Endothelial cell of umbilical vein (primary cell): ENCODE measurements at regions of chr12 and their contacts with region 1.

Region 1: GRCh38 chr12:65536876-65537661 is 258.6 kb downstream of the MSRB3 start:
- DNase-seq: peak; percentile 94
- H3K4me3 ChIP-seq: no peak overlapping the region
- H3K27ac ChIP-seq: peak overlapping the region; percentile 98
- H3K4me1 ChIP-seq: peaks cover 58% of the 10 kb centered on the region
- H3K27me3 ChIP-seq: no peaks in the 10 kb centered on the region
- CTCF ChIP-seq: no peak
- POLR2A ChIP-seq: peak; percentile 45

Region 2: DNA sequence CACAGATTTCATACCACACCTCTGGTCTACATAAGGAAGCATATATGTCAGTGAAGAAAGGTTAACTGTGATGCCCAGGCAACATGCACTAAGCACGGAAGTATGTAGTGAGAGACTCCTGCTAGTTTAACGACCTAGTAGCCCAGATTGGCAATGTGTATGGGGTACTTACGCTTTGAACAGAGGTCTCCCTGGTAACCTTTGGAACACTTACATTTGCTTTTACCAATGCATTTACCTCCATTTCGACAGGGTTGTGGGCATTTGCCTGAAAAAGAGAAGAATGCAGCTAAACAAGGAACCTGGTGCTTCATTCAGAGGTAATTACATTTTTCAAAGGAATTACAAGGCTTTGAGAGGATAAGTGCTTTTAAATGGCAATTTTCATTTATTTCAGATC is 481.2 kb before region 1 on chr12:
- CTCF ChIA-PET with region 1: no interaction called
- POLR2A ChIA-PET with region 1: no interaction called
- dilution Hi-C with region 1: no loop called
- intact Hi-C with region 1: no loop called
- DNase-seq: no peak
- H3K4me3 ChIP-seq: no peak overlapping the region
- H3K27ac ChIP-seq: no peak overlapping the region
- H3K4me1 ChIP-seq: no peaks in the 10 kb centered on the region
- H3K27me3 ChIP-seq: peaks cover 2 to 4% of the 10 kb centered on the region in 2 experiments
- CTCF ChIP-seq: no peak
- POLR2A ChIP-seq: no peak

Region 3: GRCh38 chr12:65430571-65431306 is 106.3 kb before region 1 on chr12:
- CTCF ChIA-PET with region 1: interaction called, 4 read pairs
- POLR2A ChIA-PET with region 1: interaction called, 6 read pairs
- dilution Hi-C with region 1: no loop called
- intact Hi-C with region 1: loop called (anchors 1 kb)
- DNase-seq: peak; percentile 80
- H3K4me3 ChIP-seq: peak overlapping the region in 1 of 3 experiments; percentile 28
- H3K27ac ChIP-seq: peak overlapping the region; percentile 94
- H3K4me1 ChIP-seq: peaks cover 51% of the 10 kb centered on the region
- H3K27me3 ChIP-seq: no peaks in the 10 kb centered on the region
- CTCF ChIP-seq: no peak
- POLR2A ChIP-seq: peak; percentile 60

Region 4: DNA sequence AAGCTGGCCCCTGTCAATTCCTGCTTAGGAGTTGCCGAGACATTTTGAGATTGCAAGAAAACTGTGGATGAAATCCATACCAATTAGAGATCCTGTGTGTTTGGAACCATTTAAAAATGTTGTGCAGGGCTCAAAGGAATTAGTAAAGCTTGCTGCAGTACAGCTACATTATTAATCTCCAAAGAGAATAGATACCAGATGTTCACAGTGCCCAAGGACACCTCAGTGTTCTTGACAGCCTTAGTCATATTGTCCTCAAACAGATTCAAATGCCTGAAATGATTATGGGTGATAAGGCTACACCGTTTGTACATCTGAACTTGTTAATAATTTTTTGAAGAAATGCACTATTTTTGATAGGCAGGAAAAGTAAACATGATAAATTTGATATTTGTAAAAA is 94.0 kb before region 1 on chr12:
- CTCF ChIA-PET with region 1: no interaction called
- POLR2A ChIA-PET with region 1: no interaction called
- dilution Hi-C with region 1: no loop called
- intact Hi-C with region 1: no loop called
- DNase-seq: no peak
- H3K4me3 ChIP-seq: no peak overlapping the region
- H3K27ac ChIP-seq: no peak overlapping the region
- H3K4me1 ChIP-seq: peaks cover 6% of the 10 kb centered on the region
- H3K27me3 ChIP-seq: no peaks in the 10 kb centered on the region
- CTCF ChIP-seq: no peak
- POLR2A ChIP-seq: no peak

Region 5: GRCh38 chr12:65525491-65526161 is 11.4 kb before region 1 on chr12:
- CTCF ChIA-PET with region 1: interaction called, 12 read pairs
- POLR2A ChIA-PET with region 1: no interaction called
- dilution Hi-C with region 1: no loop called
- intact Hi-C with region 1: loop called (anchors 1 kb)
- DNase-seq: no peak
- H3K4me3 ChIP-seq: no peak overlapping the region
- H3K27ac ChIP-seq: no peak overlapping the region
- H3K4me1 ChIP-seq: peaks cover 26% of the 10 kb centered on the region
- H3K27me3 ChIP-seq: no peaks in the 10 kb centered on the region
- CTCF ChIP-seq: no peak
- POLR2A ChIP-seq: no peak

Region 6: DNA sequence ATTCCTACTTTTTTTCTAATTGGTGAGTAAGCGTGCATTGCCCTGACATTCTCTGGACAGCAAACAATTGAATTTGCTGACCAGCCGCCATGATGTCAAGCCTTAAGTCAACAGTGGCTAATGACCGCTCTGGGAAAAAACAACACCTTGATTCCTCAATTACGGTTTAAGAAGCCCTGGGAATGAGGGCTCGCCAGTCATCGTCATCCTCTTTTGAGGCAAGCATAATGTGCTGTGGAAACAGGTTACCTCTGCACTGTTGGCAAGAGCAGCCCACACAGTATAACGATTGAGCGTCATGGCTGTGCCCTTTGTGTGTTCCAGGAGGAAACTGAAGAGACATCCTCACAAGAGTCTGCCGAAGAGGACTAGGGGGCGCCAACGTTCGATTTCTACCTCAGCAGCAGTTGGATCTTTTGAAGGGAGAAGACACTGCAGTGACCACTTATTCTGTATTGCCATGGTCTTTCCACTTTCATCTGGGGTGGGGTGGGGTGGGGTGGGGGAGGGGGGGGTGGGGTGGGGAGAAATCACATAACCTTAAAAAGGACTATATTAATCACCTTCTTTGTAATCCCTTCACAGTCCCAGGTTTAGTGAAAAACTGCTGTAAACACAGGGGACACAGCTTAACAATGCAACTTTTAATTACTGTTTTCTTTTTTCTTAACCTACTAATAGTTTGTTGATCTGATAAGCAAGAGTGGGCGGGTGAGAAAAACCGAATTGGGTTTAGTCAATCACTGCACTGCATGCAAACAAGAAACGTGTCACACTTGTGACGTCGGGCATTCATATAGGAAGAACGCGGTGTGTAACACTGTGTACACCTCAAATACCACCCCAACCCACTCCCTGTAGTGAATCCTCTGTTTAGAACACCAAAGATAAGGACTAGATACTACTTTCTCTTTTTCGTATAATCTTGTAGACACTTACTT is 426.1 kb after region 1 on chr12:
- CTCF ChIA-PET with region 1: no interaction called
- POLR2A ChIA-PET with region 1: no interaction called
- dilution Hi-C with region 1: no loop called
- intact Hi-C with region 1: loop called (anchors 10 kb)
- DNase-seq: peak; percentile 85
- H3K4me3 ChIP-seq: no peak overlapping the region
- H3K27ac ChIP-seq: peak overlapping the region; percentile 70
- H3K4me1 ChIP-seq: peaks cover 36% of the 10 kb centered on the region
- H3K27me3 ChIP-seq: no peaks in the 10 kb centered on the region
- CTCF ChIP-seq: peak; percentile 7 to 11
- POLR2A ChIP-seq: no peak